ENCODE measurements at regions of chr7 and their contacts with region 1.

Region 1: DNA sequence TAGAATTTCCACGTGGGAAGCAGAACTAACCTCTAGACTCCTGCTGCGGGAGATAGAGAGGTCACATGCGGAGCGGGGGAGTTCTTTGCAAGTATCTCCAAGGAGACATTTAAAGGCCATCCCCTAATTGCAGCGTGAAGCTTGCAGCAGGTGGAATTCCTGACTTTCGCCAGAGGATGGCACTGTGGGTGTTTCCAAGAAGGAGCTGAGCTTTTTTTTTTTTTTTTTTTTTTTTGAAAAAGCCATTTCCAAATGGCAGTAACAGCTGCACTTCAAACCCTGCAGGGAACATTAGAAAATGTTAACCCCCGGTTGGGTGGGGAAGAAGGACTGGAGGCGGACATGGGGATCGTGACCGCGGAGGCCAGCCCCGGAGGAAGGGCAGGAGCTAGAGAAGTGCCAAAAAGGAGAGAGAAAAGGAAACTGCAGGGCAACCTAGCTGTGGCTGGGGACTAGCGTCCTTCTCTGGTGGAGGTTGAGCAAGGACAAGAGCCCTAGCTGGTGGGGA is 487.7 kb downstream of the TYW1 start:
- DNase-seq: peak in 4 of 5 donors; percentile 43 to 57 (median 50)
- ATAC-seq: peak in 3 of 4 donors; percentile 53 to 66 (median 55)
- H3K4me3 ChIP-seq: peak overlapping the region in 9 of 12 donors; percentile 14 to 52 (median 32)
- H3K27ac ChIP-seq: no peak overlapping the region
- H3K4me1 ChIP-seq: peaks cover 0 to 8% (median 0%) of the 10 kb centered on the region in 12 donors
- H3K27me3 ChIP-seq: no peaks in the 10 kb centered on the region
- CTCF ChIP-seq: peak; percentile 47 to 80 (median 72)
- POLR2A ChIP-seq: no peak

Region 2: DNA sequence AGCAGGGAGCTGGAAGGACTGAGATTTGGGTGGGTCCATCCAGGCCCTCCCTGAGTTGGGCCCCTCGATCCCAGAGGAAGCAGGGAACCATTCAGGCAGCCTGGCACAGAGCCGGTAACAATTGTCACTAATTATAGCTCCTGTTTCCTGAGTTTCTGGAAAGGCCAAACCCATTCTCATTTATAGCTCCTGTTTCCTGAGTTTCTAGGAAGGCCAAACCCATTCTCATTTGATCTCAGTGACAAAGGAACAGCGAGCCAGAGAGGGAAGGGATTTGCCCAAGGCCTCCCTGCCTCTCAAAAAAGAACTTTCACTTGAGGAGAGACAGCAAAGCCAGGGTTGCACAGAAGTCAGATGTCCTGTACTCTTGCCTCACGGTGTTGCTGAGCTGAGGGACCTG is 34.3 kb after region 1 on chr7:
- intact Hi-C with region 1: loop called in 1 of 10 experiments (anchors 2 kb)
- DNase-seq: peak; percentile 63 to 83 (median 72)
- ATAC-seq: peak; percentile 78 to 95 (median 92)
- H3K4me3 ChIP-seq: no peak overlapping the region
- H3K27ac ChIP-seq: peak overlapping the region in 9 of 12 donors; percentile 6 to 70 (median 46)
- H3K4me1 ChIP-seq: peaks cover 0 to 34% (median 17%) of the 10 kb centered on the region in 12 donors
- H3K27me3 ChIP-seq: no peaks in the 10 kb centered on the region
- CTCF ChIP-seq: no peak
- POLR2A ChIP-seq: no peak

Region 3: DNA sequence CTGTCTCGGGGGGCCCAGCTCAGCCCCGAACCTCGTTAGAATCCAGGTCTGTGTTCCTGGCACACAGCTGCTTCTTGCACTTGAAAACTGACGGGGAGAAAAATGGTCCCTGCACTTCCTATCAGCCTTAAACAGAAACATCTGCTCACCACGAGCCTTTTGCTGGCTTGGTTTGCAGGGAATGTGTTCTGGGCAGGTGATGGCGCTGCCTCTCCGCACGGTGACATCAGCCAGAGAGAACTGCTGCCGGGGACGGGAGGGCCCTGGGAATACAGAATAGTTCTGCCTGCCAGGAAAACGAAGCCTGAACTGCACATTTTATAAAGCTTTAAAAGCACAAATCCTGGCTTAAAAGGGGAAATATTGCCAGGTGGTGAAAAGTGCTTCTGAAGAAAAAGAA is 134.9 kb after region 1 on chr7:
- intact Hi-C with region 1: loop called in 7 of 10 experiments (anchors 2 to 10 kb)
- DNase-seq: peak in 4 of 5 donors; percentile 19 to 39 (median 38)
- ATAC-seq: peak in 3 of 4 donors; percentile 24 to 69 (median 67)
- H3K4me3 ChIP-seq: peak overlapping the region in 3 of 12 donors; percentile 7 to 18 (median 7)
- H3K27ac ChIP-seq: peak overlapping the region in 10 of 12 donors; percentile 2 to 70 (median 54)
- H3K4me1 ChIP-seq: peaks cover 0 to 19% (median 5%) of the 10 kb centered on the region in 12 donors
- H3K27me3 ChIP-seq: peaks cover 0 to 29% (median 0%) of the 10 kb centered on the region in 9 donors
- CTCF ChIP-seq: peak in 2 of 12 donors; percentile 8 to 20
- POLR2A ChIP-seq: no peak

Region 4: GRCh38 chr7:67625257-67625737 is 141.0 kb after region 1 on chr7:
- intact Hi-C with region 1: loop called in 5 of 10 experiments (anchors 2 to 10 kb)
- DNase-seq: peak; percentile 80 to 87 (median 83)
- ATAC-seq: peak; percentile 80 to 93 (median 90)
- H3K4me3 ChIP-seq: peak overlapping the region in 7 of 12 donors; percentile 15 to 39 (median 31)
- H3K27ac ChIP-seq: no peak overlapping the region
- H3K4me1 ChIP-seq: peaks cover 0 to 7% (median 0%) of the 10 kb centered on the region in 12 donors
- H3K27me3 ChIP-seq: peaks cover 0 to 24% (median 2%) of the 10 kb centered on the region in 9 donors
- CTCF ChIP-seq: peak; percentile 72 to 92 (median 88)
- POLR2A ChIP-seq: no peak

Region 5: DNA sequence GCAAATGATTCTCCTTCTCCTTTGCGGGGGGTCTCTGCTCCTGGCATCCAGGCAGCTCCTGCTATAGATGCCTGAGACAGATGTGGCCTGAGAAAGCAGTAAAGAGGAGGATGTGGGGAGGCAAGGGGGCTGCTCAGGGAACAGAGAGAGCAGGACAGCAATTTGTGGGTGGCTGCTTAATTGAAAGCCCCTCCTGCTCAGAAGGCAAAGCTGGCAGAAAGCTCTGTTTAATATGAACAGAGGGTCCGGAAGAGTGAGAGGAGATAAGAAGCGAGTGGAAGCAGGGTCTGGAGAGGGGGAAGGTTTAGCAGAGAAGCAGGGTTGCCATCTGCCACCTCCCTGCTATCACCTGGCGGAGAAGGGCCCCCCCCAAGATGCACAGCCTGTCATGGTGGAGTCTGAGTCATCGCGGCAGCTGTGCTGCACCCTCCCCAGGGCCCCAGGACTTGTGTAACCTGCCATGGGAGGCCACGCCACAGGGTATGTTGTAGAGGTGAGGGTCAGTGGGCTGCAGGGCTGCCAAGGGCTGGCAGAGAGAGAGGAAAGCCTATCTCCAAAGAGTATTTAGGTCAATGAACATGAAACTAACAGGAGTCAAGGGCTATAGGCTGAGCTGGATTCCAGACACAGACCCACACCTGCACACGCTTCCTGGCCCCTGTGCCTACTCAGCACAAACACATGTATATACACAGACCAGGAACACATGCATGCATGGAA is 1004.2 kb after region 1 on chr7:
- intact Hi-C with region 1: loop called in 1 of 10 experiments (anchors 10 kb)
- DNase-seq: no peak
- ATAC-seq: no peak
- H3K4me3 ChIP-seq: no peak overlapping the region
- H3K27ac ChIP-seq: no peak overlapping the region
- H3K4me1 ChIP-seq: no peaks in the 10 kb centered on the region
- H3K27me3 ChIP-seq: peaks cover 0 to 4% (median 0%) of the 10 kb centered on the region in 9 donors
- CTCF ChIP-seq: no peak
- POLR2A ChIP-seq: no peak

Region 6: GRCh38 chr7:68576366-68576765 is 1092.1 kb after region 1 on chr7:
- intact Hi-C with region 1: no loop called
- DNase-seq: no peak
- ATAC-seq: no peak
- H3K4me3 ChIP-seq: no peak overlapping the region
- H3K27ac ChIP-seq: no peak overlapping the region
- H3K4me1 ChIP-seq: no peaks in the 10 kb centered on the region
- H3K27me3 ChIP-seq: no peaks in the 10 kb centered on the region
- CTCF ChIP-seq: no peak
- POLR2A ChIP-seq: no peak